Left lung (tissue), 14 donors: ENCODE measurements at regions of chr19 and their contacts with region 1.

Region 1: DNA sequence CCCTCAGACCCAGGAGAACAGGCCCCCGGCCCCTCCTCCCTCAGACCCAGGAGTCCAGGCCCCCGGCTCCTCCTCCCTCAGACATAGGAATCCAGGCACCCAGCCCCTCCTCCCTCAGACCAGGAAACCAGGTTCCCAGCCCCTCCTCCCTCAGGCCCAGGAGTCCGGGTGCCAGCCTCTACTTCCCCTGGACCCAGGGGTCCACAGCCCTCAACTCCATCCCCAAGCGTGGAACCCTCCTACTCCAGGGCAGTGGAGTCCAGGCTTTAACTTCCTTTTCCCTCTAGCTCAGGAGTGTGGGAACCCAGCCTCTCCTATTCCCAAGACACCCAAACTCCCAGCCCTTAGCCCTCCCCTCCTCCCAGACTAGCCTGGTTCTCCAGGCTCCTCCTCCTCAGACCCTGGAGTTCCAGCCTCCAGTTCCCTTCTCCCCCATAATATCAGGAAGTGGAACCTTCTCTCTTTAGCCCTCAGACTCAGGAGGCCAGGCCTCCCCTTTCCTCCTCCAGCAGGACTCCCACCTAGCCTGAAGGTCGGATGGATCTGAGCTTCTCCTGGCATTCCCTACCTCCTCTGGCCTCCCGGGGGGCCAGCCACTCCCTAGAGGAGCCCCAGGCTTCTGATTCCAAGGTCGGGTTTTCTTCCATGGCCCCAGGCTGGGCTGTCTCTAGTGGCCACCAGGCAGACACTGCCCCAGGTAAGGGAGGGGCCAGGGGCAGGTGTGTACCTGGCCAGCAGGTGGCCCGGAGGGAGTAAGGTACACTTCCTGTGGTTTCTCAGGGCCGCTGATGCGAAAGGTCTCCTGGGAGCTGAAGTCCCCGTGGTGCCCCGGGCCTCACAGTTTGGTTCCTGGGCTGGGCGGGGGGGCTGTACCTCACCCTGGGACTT is at the start of gene TMC4:
- DNase-seq: peak in 3 of 4 donors; percentile 75 to 87 (median 76)
- ATAC-seq: peak; percentile 96
- H3K4me3 ChIP-seq: peak within 1 kb of the TSS; percentile 18 to 40
- H3K27ac ChIP-seq: peak within 1 kb of the TSS in 1 of 2 donors; percentile 15
- H3K4me1 ChIP-seq: peaks cover 4 to 22% of the 10 kb centered on the region in 2 donors
- H3K27me3 ChIP-seq: no peaks in the 10 kb centered on the region
- CTCF ChIP-seq: peak; percentile 26 to 52
- polyA plus RNA-seq, gene TMC4: 29.1 to 39.7 (median 32.0) TPM

Region 2: GRCh38 chr19:54029930-54030490 is 142.7 kb before region 1 on chr19:
- intact Hi-C with region 1: no loop called
- DNase-seq: peak in 3 of 4 donors; percentile 13 to 45 (median 38)
- ATAC-seq: peak; percentile 82
- H3K4me3 ChIP-seq: no peak overlapping the region
- H3K27ac ChIP-seq: no peak overlapping the region
- H3K4me1 ChIP-seq: peaks cover 0 to 13% of the 10 kb centered on the region in 2 donors
- H3K27me3 ChIP-seq: peaks cover 0 to 59% of the 10 kb centered on the region in 2 donors
- CTCF ChIP-seq: peak; percentile 52 to 65

Region 3: DNA sequence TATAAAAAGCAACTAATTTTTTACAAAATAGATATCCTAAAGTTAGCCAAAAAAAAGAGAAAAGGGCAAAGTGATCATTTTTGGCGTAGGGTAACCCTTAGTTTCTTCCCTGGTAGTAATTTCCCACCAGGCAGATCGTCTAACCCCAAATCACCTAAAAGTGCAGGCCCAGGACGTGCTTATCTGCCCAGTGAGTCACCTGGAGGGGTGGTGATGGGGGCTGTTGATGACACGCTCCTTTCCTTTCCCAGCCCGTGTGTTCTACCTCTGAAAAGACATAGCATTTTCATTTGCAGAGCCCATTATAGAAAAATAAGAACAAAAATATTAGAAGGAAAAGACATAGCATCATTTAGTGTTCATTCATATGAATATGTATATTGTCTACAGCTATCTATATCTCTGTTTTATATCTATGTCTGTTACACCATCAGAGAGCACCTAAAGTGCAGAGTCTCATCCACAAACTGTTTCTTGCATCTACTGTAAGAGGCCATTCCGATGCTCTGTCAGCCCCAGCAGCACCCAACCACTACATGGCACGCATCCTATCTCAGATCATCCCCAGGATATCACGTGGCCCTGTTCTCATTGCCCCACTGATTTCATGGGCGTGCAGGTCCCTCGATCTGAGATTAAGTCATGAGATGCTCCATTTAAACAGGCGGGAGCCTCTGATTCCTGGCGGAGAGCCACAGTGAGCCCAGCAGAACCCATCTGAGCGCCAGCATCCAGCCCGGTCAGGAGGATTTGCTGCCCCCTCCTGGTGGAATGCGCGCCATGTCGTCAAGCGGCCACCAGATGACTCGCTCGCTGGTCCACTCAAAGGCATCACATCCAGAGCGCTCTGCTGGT is 58.6 kb after region 1 on chr19:
- intact Hi-C with region 1: loop called in 1 of 2 experiments (anchors 5 kb)
- DNase-seq: peak; percentile 81 to 96 (median 89)
- ATAC-seq: peak; percentile 100
- H3K4me3 ChIP-seq: no peak overlapping the region
- H3K27ac ChIP-seq: no peak overlapping the region
- H3K4me1 ChIP-seq: peaks cover 0 to 9% of the 10 kb centered on the region in 2 donors
- H3K27me3 ChIP-seq: peaks cover 0 to 13% of the 10 kb centered on the region in 2 donors
- CTCF ChIP-seq: peak; percentile 82 to 98